Vagina (tissue), 2 donors: ENCODE measurements at regions of chr6 and their contacts with region 1.

Region 1: DNA sequence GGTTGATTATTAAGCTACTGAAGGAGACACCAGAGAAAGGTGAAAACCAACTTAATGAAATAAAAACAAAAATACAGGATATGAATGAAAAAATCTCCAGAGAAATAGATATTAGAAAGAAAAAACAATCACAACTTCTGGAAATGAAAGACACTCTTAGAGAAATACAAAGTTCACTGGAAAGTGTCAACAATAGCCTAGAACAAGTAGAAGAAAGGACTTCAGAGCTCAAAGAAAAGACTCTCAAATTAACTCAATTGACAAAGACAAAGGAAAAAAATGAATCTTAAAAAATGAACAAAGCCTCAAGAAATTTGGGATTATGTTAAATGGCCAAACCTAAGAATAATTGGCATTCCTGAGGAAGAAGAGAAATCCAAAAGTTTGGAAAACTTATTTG is 10.3 kb upstream of the MCM9 start:
- DNase-seq: no peak
- H3K4me3 ChIP-seq: no peak overlapping the region
- H3K27ac ChIP-seq: no peak overlapping the region
- H3K4me1 ChIP-seq: no peaks in the 10 kb centered on the region
- H3K27me3 ChIP-seq: no peaks in the 10 kb centered on the region
- CTCF ChIP-seq: no peak
- POLR2A ChIP-seq: no peak

Region 2: GRCh38 chr6:118061666-118062065 is 883.6 kb before region 1 on chr6:
- intact Hi-C with region 1: loop called (anchors 5 kb)
- DNase-seq: no peak
- H3K4me3 ChIP-seq: no peak overlapping the region
- H3K27ac ChIP-seq: no peak overlapping the region
- H3K4me1 ChIP-seq: no peaks in the 10 kb centered on the region
- H3K27me3 ChIP-seq: no peaks in the 10 kb centered on the region
- CTCF ChIP-seq: no peak
- POLR2A ChIP-seq: no peak